ENCODE measurements at regions of chr15 and their contacts with region 1.

Region 1: GRCh38 chr15:59492389-59493377 is 54.7 kb downstream of the FAM81A start:
- DNase-seq: peak; percentile 30 to 90 (median 73)

Region 2: GRCh38 chr15:58987489-58988005 is 505.1 kb before region 1 on chr15 and contains the start of gene RNF111:
- intact Hi-C with region 1: loop called (anchors 5 kb)
- DNase-seq: peak; percentile 79 to 96 (median 91)

Region 3: GRCh38 chr15:59140422-59141226 is 352.1 kb before region 1 on chr15:
- intact Hi-C with region 1: loop called (anchors 10 kb)
- DNase-seq: no peak

Region 4: DNA sequence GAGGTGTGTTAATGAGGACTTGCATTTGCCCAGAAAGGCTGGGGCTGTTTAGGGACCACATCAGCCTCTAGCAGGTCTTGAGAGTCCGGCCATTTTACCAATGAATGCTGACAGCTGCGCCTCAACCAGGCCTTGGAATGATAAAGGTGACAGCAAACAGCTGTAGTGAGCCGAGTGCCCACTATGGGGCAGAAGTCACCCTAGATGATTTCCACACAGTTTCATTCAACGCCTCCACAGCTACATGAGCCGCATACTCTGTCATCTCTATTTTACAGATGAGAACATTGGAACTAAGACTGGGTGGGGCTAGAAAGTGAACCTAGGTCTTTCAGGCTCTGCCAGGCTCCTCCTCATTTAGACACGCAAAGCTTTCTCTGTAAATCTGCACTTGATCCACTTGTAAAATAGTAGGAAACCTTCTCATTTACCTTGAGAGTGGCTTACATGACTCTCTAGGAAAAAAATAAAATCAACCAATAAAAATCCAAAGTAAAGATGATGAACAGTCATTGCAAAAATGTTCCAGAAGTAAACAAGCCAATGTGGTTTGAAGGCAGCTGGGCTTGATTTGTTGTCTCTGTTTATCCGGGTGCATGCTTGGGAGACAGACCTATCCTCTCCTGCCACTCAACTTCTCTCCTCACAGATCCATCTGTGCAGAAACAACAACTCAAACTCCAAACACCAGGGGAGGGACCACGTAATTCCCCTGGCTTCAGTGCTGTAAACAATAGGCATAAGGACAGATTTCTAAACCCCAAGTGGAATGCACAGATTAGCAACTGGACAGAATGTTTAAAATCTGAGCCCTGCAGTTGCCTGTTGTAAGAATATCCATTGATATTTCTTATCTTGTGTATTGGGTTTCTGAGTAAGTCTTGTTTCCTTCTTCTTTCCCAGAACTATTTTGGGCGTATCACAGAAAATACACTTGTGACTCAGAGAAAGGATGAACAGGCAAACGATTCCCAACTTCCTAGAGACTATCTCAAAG is 317.6 kb before region 1 on chr15:
- intact Hi-C with region 1: loop called (anchors 10 kb)
- DNase-seq: peak; percentile 39 to 87 (median 66)

Region 5: GRCh38 chr15:59247364-59247763 is 245.3 kb before region 1 on chr15:
- intact Hi-C with region 1: loop called (anchors 10 kb)
- DNase-seq: peak; percentile 22 to 89 (median 71)